Mammary epithelial cell (primary cell): ENCODE measurements at regions of chr6 and their contacts with region 1.

Region 1: GRCh38 chr6:50825375-50826036 is 6.8 kb downstream of the TFAP2B start:
- DNase-seq: no peak
- H3K4me3 ChIP-seq: no peak overlapping the region
- H3K27ac ChIP-seq: no peak overlapping the region
- H3K4me1 ChIP-seq: no peaks in the 10 kb centered on the region
- H3K27me3 ChIP-seq: peaks cover 67% of the 10 kb centered on the region
- CTCF ChIP-seq: no peak

Region 2: DNA sequence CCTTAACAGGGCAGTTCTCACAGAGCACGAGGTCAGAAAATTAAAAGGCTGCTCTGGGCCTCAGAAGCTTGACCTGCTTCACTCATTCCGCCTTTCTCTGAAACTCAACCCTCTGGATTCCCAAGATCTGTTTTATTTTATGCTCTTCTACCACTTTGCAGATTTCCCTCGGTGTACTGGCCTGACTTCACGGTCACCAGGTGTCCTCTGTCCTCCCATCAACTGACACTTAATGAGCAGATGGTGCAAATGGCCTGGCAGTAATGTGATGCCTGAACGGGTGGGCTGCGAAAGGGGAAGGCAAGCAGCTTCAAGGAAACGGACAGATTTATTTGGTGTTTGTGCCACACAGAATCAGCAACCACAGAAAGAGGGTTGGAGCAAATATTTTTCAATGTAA is 281.8 kb before region 1 on chr6:
- CTCF ChIA-PET with region 1: no interaction called
- dilution Hi-C with region 1: no loop called
- in situ Hi-C with region 1: no loop called
- intact Hi-C with region 1: no loop called
- DNase-seq: no peak
- H3K4me3 ChIP-seq: no peak overlapping the region
- H3K27ac ChIP-seq: no peak overlapping the region
- H3K4me1 ChIP-seq: no peaks in the 10 kb centered on the region
- H3K27me3 ChIP-seq: no peaks in the 10 kb centered on the region
- CTCF ChIP-seq: no peak

Region 3: DNA sequence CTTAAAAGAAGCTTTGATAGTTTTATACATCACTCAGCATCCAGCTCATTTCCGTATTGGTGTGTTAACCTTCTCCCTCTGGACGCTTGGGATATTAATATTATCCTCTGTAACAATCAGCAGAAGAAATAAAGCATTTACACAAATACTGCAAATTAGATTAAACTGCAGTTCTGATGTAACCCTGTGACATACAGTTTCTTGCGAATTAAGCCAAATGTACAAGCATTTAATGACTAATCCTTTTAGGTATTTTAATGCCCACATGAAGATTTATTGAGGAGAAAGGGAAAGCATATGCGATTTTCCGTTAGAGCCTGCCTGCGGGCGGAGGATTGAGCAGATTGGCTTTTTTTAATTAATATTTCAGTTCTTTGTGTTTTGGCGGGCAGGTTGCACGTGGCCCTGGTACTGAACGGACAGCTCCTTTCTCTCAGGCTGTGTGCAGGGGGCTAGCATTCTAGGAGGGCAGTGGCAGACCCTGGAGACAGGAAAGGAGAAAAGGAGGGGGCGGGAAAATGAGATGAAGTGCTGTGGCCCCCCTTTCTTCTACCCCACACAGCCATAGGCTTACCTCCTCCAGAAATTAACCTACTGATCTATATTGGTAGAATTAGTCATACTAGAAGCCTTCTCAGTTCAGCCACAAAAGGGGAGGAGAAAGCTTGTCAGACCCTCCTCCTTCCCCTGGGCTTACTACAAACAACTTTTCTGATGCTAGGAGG is 126.3 kb before region 1 on chr6:
- CTCF ChIA-PET with region 1: no interaction called
- dilution Hi-C with region 1: no loop called
- in situ Hi-C with region 1: no loop called
- intact Hi-C with region 1: no loop called
- DNase-seq: no peak
- H3K4me3 ChIP-seq: no peak overlapping the region
- H3K27ac ChIP-seq: no peak overlapping the region
- H3K4me1 ChIP-seq: no peaks in the 10 kb centered on the region
- H3K27me3 ChIP-seq: no peaks in the 10 kb centered on the region
- CTCF ChIP-seq: no peak

Region 4: DNA sequence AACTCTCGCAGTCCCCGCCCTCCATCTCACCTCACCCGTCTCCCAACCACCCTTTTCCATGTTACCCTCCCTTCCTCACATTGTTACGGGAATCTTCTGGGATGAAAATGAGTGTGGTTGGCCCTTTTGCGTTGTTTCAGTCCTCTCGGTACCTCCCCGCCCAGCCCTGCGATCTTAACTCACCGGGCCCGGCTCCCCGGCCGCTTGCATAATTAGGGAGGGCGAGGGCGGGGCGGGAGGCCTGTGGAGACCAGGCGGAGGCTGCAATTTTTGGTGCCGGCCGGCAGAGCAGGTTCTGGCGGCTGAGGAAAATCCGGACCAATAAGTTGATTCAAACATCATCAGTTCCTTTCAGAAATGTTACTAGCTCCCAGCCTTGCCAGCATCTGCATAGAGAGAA is 18.3 kb after region 1 on chr6:
- CTCF ChIA-PET with region 1: interaction called, 16 read pairs
- dilution Hi-C with region 1: no loop called
- in situ Hi-C with region 1: no loop called
- intact Hi-C with region 1: loop called (anchors 2 kb)
- DNase-seq: no peak
- H3K4me3 ChIP-seq: peak overlapping the region in 2 of 3 experiments; percentile 9 to 23
- H3K27ac ChIP-seq: no peak overlapping the region
- H3K4me1 ChIP-seq: no peaks in the 10 kb centered on the region
- H3K27me3 ChIP-seq: peaks cover 43% of the 10 kb centered on the region
- CTCF ChIP-seq: peak in 1 of 2 donors; percentile 21

Region 5: DNA sequence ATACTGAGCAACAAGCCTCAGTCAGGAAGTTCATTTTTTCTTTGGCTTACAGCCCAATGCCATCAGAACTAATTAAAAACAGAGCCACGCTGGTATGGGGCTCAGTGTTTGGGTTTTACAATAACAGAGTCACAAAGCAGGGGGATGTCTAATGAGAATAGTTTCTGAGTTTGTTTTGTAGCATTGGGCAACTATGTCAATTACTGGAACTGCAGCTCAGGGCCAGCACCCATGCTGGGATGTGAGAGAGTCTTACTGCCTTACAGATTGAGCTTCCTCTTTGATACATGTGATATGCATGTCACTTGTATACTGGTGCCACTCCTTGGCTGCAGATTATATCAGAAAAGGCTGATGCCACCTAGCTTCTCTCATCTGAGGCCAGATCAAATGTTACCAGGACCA is 110.8 kb after region 1 on chr6:
- CTCF ChIA-PET with region 1: no interaction called
- dilution Hi-C with region 1: no loop called
- in situ Hi-C with region 1: no loop called
- intact Hi-C with region 1: no loop called
- DNase-seq: no peak
- H3K4me3 ChIP-seq: no peak overlapping the region
- H3K27ac ChIP-seq: no peak overlapping the region
- H3K4me1 ChIP-seq: no peaks in the 10 kb centered on the region
- H3K27me3 ChIP-seq: no peaks in the 10 kb centered on the region
- CTCF ChIP-seq: no peak